ENCODE measurements at regions of chr11 and their contacts with region 1.

Region 1: GRCh38 chr11:39192671-39193070 is 2266.8 kb downstream of the LRRC4C start:
- DNase-seq: no peak
- H3K4me3 Mint-ChIP-seq: no peak overlapping the region
- H3K27ac Mint-ChIP-seq: no peak overlapping the region
- H3K4me1 Mint-ChIP-seq: no peaks in the 10 kb centered on the region
- H3K27me3 Mint-ChIP-seq: no peaks in the 10 kb centered on the region
- CTCF ChIP-seq: no peak

Region 2: DNA sequence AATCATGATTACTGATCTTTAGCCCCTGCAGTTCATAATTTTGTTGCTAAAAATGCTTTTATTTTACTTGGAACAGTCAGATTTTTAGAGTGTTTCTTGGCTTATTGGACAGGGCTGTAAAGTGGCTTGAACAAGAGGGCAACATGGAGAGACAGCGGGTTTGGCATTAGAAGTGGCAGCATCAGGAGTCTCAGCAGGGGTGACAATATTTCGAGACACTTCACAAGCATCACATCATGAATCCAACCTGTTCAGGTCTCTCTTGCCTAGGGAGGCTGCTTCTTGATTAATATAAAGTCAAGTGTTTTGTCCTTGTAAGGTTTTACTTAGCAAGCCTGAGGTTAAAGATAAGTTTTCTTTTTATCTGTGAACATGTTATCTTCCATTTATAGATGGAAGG is 17.3 kb after region 1 on chr11:
- CTCF ChIA-PET with region 1: no interaction called
- intact Hi-C with region 1: loop called (anchors 1 kb)
- DNase-seq: no peak
- H3K4me3 Mint-ChIP-seq: no peak overlapping the region
- H3K27ac Mint-ChIP-seq: no peak overlapping the region
- H3K4me1 Mint-ChIP-seq: no peaks in the 10 kb centered on the region
- H3K27me3 Mint-ChIP-seq: no peaks in the 10 kb centered on the region
- CTCF ChIP-seq: no peak

Measured in Calu3 (cell line).